Ascending aorta (tissue), 2 donors: ENCODE measurements at regions of chr10 and their contacts with region 1.

Region 1: DNA sequence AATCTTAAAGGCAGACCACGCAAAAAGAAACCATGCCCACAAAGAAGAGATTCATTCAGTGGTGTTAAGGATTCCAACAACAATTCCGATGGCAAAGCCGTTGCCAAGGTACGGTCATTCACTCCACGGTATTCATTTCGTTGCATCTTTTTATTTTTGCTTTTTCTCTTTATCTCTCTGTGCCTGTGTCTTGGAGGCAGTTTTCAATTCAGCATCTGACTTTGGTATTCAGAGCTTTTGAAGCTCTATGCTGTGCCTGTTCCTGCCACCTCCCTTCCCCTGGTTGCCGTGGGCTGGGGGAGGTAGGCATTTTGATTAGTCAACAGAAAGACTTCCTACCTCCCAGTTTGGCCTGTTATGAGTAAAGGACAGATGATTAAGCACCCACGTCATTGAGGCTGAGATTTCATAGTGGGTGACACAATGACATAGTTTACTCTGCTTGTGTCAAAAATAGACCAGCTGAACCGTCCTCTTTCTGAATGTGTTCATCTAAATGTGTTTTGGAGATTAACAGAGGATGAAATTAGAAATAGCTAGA is 149.5 kb downstream of the ARID5B start:
- DNase-seq: peak; percentile 60 to 92
- H3K4me3 ChIP-seq: peak overlapping the region; percentile 56 to 78
- H3K27ac ChIP-seq: peak overlapping the region; percentile 95 to 97
- H3K4me1 ChIP-seq: peaks cover 13 to 57% of the 10 kb centered on the region in 2 donors
- H3K27me3 ChIP-seq: no peaks in the 10 kb centered on the region
- CTCF ChIP-seq: no peak

Region 2: DNA sequence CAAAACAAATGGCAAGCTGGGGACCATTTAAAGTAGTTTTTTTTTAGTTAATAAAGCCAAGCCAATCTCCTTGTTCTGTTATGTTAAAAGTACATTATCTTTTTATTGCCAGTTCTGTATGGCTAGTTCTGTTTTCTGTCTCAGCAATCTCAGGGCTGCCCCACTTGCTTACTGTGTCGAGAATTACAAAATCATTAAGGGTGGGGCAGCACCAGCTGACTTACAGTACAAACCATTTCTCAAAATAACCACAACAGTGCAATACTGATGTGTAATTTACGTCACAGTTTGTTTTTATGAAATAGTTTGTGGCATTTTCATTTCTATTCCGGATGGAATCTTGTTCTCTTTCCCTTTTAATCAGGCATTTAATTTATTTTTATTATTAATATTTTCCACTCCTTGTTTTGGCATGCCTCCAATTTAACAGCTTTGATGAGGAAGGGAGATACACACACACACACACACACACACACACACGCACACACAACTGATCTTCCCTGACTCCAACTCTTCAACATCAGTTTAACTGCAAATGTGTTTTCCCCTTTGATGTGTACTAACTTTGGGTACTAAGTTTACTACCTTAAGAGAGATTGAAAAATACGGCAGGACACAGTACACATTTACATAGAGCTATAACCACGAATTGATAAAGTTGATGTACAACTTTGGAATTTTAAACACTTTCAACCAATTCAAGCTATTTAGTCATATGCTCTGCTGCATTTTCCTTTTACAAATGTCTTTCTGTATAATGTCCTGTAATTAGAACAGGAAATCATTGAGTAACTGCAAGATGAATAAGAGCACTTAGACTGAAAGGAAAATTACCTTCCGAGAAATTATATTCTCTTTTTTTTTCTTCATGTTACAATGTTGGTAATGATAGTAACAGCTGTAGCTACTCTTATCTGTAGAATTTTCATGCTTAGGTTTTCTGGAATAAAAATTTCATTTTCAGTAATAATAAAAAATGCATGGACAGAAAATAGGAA is 58.0 kb before region 1 on chr10:
- intact Hi-C with region 1: loop called (anchors 2 kb)
- DNase-seq: peak; percentile 48 to 88
- H3K4me3 ChIP-seq: peak overlapping the region; percentile 34 to 40
- H3K27ac ChIP-seq: peak overlapping the region; percentile 73 to 87
- H3K4me1 ChIP-seq: peaks cover 3 to 54% of the 10 kb centered on the region in 2 donors
- H3K27me3 ChIP-seq: no peaks in the 10 kb centered on the region
- CTCF ChIP-seq: no peak

Region 3: GRCh38 chr10:62095181-62096071 is 44.5 kb after region 1 on chr10:
- intact Hi-C with region 1: loop called (anchors 5 kb)
- DNase-seq: no peak
- H3K4me3 ChIP-seq: no peak overlapping the region
- H3K27ac ChIP-seq: peak overlapping the region in 1 of 2 donors; percentile 27
- H3K4me1 ChIP-seq: peaks cover 4 to 19% of the 10 kb centered on the region in 2 donors
- H3K27me3 ChIP-seq: no peaks in the 10 kb centered on the region
- CTCF ChIP-seq: no peak

Region 4: GRCh38 chr10:62373995-62374861 is 323.3 kb after region 1 on chr10 and contains the start of gene ZNF365:
- intact Hi-C with region 1: loop called (anchors 10 kb)
- DNase-seq: peak in 1 of 2 donors; percentile 77
- H3K4me3 ChIP-seq: peak within 1 kb of the TSS; percentile 55 to 93
- H3K27ac ChIP-seq: peak within 1 kb of the TSS; percentile 70 to 82
- H3K4me1 ChIP-seq: peaks cover 4% of the 10 kb centered on the region in 2 donors
- H3K27me3 ChIP-seq: no peaks in the 10 kb centered on the region
- CTCF ChIP-seq: peak in 1 of 3 experiments; percentile 8
- total RNA-seq, gene ZNF365: not detected

Region 5: DNA sequence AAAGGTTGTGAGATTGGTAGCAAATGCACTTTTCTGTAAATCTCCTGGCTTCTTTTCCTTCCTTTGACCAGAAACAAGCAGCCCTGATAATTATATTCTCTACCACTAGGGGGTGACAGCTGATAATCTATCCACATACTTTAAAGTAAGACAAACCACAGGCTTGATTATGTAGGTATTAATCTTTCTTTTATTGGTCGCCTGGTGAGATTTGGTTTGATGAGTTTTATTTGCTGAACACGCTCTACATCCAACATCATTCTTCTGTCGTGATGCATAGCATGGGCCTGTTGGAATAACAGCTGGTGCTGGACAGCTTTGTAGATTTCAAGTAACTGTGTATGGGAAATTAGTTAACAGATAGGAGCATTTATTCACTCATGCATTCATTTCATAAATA is 386.7 kb after region 1 on chr10:
- intact Hi-C with region 1: loop called (anchors 5 kb)
- DNase-seq: no peak
- H3K4me3 ChIP-seq: no peak overlapping the region
- H3K27ac ChIP-seq: no peak overlapping the region
- H3K4me1 ChIP-seq: peaks cover 0 to 5% of the 10 kb centered on the region in 2 donors
- H3K27me3 ChIP-seq: no peaks in the 10 kb centered on the region
- CTCF ChIP-seq: peak; percentile 63 to 79 (median 69)

Region 6: GRCh38 chr10:63133056-63133820 is 1082.3 kb after region 1 on chr10 and contains the start of gene NRBF2:
- intact Hi-C with region 1: loop called (anchors 10 kb)
- DNase-seq: peak; percentile 95 to 99
- H3K4me3 ChIP-seq: peak within 1 kb of the TSS; percentile 97 to 99
- H3K27ac ChIP-seq: peak within 1 kb of the TSS; percentile 95 to 97
- H3K4me1 ChIP-seq: peaks cover 4 to 10% of the 10 kb centered on the region in 2 donors
- H3K27me3 ChIP-seq: no peaks in the 10 kb centered on the region
- CTCF ChIP-seq: peak in 1 of 3 experiments; percentile 21
- total RNA-seq, gene NRBF2: 4.2 TPM